Heart right ventricle (tissue), 16 donors: ENCODE measurements at regions of chr4 and their contacts with region 1.

Region 1: DNA sequence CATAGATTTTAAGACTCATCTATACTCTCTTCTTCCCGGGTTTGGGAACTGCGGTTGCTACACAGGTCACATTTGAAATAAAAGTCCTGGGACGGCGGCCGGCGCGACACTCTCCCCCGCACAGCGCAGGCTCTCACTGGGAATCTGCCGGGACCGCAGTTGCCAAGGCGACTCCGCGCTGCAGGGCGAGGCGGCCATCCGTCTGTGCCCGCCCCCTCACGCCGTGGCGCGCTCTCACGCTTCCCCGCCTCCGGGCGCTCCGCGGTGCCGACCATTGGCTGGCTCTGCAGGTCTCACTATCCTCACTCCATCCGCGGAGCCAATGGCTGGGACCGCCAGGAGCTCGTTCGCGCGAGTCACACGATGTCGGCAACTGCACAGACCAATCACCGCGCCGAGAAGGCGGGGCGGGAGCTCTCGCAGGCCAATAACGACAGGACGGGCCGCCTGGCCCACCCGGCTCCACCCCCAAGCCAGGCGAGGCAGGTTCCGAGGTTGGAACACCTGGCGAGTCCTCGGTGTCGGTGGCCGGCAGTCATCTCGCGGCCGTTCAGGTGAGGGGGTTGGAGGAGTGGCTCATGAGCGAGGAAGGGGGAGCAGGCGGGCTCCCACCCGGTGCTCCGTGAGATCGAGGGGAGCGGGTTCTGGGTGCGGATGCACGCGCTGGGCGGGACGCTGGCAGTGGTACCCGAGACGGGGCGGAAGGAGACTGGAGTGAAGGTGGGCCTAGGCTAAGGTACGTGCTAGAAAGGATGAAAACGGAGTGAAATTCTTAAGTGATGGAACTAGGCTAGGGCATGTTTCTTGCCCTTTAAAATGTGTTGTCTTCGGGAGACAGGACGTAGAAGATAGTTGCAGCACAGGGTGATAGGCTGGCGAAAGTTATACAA is at the start of gene MSMO1:
- DNase-seq: peak; percentile 99
- ATAC-seq: peak; percentile 99 to 100 (median 99)
- H3K4me3 ChIP-seq: peak within 1 kb of the TSS; percentile 65 to 96 (median 86)
- H3K27ac ChIP-seq: peak within 1 kb of the TSS; percentile 14 to 87 (median 76)
- H3K4me1 ChIP-seq: peaks cover 2 to 40% (median 18%) of the 10 kb centered on the region in 9 donors
- H3K27me3 ChIP-seq: no peaks in the 10 kb centered on the region
- CTCF ChIP-seq: peak in 1 of 9 donors; percentile 3
- total RNA-seq, gene MSMO1: 5.9 to 11.9 (median 9.0) TPM

Region 2: GRCh38 chr4:165112368-165113139 is 214.9 kb before region 1 on chr4 and contains the start of gene TMEM192:
- intact Hi-C with region 1: loop called in 1 of 10 experiments (anchors 2 kb)
- DNase-seq: peak; percentile 93
- ATAC-seq: peak; percentile 99 to 100 (median 100)
- H3K4me3 ChIP-seq: peak within 1 kb of the TSS; percentile 57 to 99 (median 90)
- H3K27ac ChIP-seq: peak within 1 kb of the TSS; percentile 55 to 93 (median 90)
- H3K4me1 ChIP-seq: peaks cover 0 to 15% (median 9%) of the 10 kb centered on the region in 9 donors
- H3K27me3 ChIP-seq: peaks cover 0 to 7% (median 0%) of the 10 kb centered on the region in 7 donors
- CTCF ChIP-seq: peak in 7 of 9 donors; percentile 10 to 57 (median 53)
- total RNA-seq, gene TMEM192: 14.4 to 23.1 (median 18.0) TPM

Region 3: GRCh38 chr4:165207431-165208220 is 119.8 kb before region 1 on chr4 and contains the start of gene KLHL2:
- intact Hi-C with region 1: loop called in 9 of 10 experiments (anchors 5 to 10 kb)
- DNase-seq: peak; percentile 82 to 85
- ATAC-seq: peak; percentile 95 to 98 (median 96)
- H3K4me3 ChIP-seq: peak within 1 kb of the TSS; percentile 46 to 91 (median 84)
- H3K27ac ChIP-seq: peak within 1 kb of the TSS; percentile 62 to 94 (median 86)
- H3K4me1 ChIP-seq: peaks cover 4 to 67% (median 24%) of the 10 kb centered on the region in 9 donors
- H3K27me3 ChIP-seq: no peaks in the 10 kb centered on the region
- CTCF ChIP-seq: peak in 1 of 9 donors; percentile 11
- total RNA-seq, gene KLHL2: 6.0 to 14.7 (median 10.9) TPM

Region 4: GRCh38 chr4:165312506-165312905 is 14.9 kb before region 1 on chr4:
- intact Hi-C with region 1: no loop called
- DNase-seq: no peak
- ATAC-seq: no peak
- H3K4me3 ChIP-seq: no peak overlapping the region
- H3K27ac ChIP-seq: no peak overlapping the region
- H3K4me1 ChIP-seq: peaks cover 0 to 10% (median 0%) of the 10 kb centered on the region in 9 donors
- H3K27me3 ChIP-seq: no peaks in the 10 kb centered on the region
- CTCF ChIP-seq: no peak

Region 5: GRCh38 chr4:165502919-165503907 is 175.8 kb after region 1 on chr4:
- intact Hi-C with region 1: no loop called
- DNase-seq: no peak
- ATAC-seq: peak in 3 of 8 donors; percentile 26 to 68 (median 67)
- H3K4me3 ChIP-seq: no peak overlapping the region
- H3K27ac ChIP-seq: peak overlapping the region in 2 of 10 donors; percentile 35 to 74
- H3K4me1 ChIP-seq: peaks cover 0 to 15% (median 0%) of the 10 kb centered on the region in 9 donors
- H3K27me3 ChIP-seq: peaks cover 0 to under 1% (median 0%) of the 10 kb centered on the region in 7 donors
- CTCF ChIP-seq: no peak